Naive thymus-derived CD4-positive, alpha-beta T cell (primary cell): ENCODE measurements at regions of chr19 and their contacts with region 1.

Region 1: GRCh38 chr19:45643024-45643926 is 4.1 kb upstream of the EML2 start:
- DNase-seq: peak; percentile 78 to 97 (median 90)
- ATAC-seq: peak; percentile 44
- H3K4me3 ChIP-seq: no peak overlapping the region
- H3K4me3 Mint-ChIP-seq: peak overlapping the region; percentile 61 to 91 (median 80)
- H3K27ac ChIP-seq: peak overlapping the region; percentile 78
- H3K27ac Mint-ChIP-seq: peak overlapping the region; percentile 52 to 92 (median 85)
- H3K4me1 ChIP-seq: peaks cover 22 to 25% of the 10 kb centered on the region in 2 donors
- H3K4me1 Mint-ChIP-seq: peaks cover 31 to 54% (median 43%) of the 10 kb centered on the region in 7 donors
- H3K27me3 ChIP-seq: no peaks in the 10 kb centered on the region
- H3K27me3 Mint-ChIP-seq: peaks cover 0 to 6% (median 3%) of the 10 kb centered on the region in 5 donors

Region 2: DNA sequence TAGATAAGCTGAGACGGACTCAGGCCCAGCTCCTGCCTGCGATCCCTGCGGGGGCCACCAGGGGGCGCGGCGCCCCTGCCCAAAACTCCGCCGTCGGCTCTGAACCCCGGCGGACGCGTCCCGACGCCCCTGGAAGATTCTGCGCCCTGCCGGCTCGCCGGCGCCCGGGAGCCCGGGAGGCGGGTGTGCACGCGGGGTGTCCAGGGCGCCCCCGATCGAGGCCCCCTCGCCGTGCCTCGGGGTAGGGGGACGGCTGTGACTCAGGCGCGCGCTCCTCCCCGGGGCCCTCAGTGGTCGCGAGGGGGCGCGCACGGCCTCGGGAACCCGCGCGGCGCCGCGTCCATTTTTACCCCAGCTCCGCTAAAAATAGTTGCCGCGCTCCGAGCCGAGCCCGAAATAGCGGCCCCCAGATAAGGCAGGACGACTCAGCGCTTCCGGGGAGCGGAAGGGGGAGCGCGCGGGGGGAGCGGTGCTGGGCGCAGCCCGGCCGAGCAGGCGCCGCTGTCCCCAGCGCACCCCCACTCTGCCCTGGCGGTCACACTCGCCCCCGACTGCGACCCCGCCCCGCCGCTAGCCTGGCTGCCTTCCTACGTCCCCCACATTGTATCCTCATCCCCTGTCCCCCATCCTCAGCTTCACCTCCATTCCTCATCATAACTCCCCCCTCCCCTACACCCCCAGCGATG is 203.6 kb before region 1 on chr19:
- CTCF ChIA-PET with region 1: interaction called, 13 read pairs
- POLR2A ChIA-PET with region 1: interaction called, 3 read pairs
- intact Hi-C with region 1: loop called (anchors 1 kb)
- DNase-seq: peak; percentile 75 to 95 (median 86)
- ATAC-seq: peak; percentile 72
- H3K4me3 ChIP-seq: peak overlapping the region; percentile 57
- H3K4me3 Mint-ChIP-seq: peak overlapping the region; percentile 68 to 83 (median 77)
- H3K27ac ChIP-seq: peak overlapping the region; percentile 69
- H3K27ac Mint-ChIP-seq: peak overlapping the region in 4 of 9 donors; percentile 51 to 91 (median 74)
- H3K4me1 ChIP-seq: peaks cover 24% of the 10 kb centered on the region in 2 donors
- H3K4me1 Mint-ChIP-seq: peaks cover 26 to 35% (median 33%) of the 10 kb centered on the region in 7 donors
- H3K27me3 ChIP-seq: no peaks in the 10 kb centered on the region
- H3K27me3 Mint-ChIP-seq: peaks cover 0 to 5% (median 0%) of the 10 kb centered on the region in 5 donors

Region 3: GRCh38 chr19:45506246-45506990 is 136.9 kb before region 1 on chr19:
- CTCF ChIA-PET with region 1: interaction called, 15 read pairs
- POLR2A ChIA-PET with region 1: interaction called, 4 read pairs
- intact Hi-C with region 1: loop called (anchors 1 kb)
- DNase-seq: peak; percentile 95 to 99 (median 98)
- ATAC-seq: peak; percentile 88
- H3K4me3 ChIP-seq: peak overlapping the region; percentile 99
- H3K4me3 Mint-ChIP-seq: peak overlapping the region; percentile 91 to 96 (median 94)
- H3K27ac ChIP-seq: peak overlapping the region; percentile 87
- H3K27ac Mint-ChIP-seq: peak overlapping the region; percentile 91 to 98 (median 97)
- H3K4me1 ChIP-seq: peaks cover 14 to 20% of the 10 kb centered on the region in 2 donors
- H3K4me1 Mint-ChIP-seq: peaks cover 29 to 46% (median 34%) of the 10 kb centered on the region in 7 donors
- H3K27me3 ChIP-seq: no peaks in the 10 kb centered on the region
- H3K27me3 Mint-ChIP-seq: no peaks in the 10 kb centered on the region

Region 4: GRCh38 chr19:45584332-45585157 is 58.7 kb before region 1 on chr19 and contains the start of gene OPA3:
- CTCF ChIA-PET with region 1: interaction called, 3 read pairs
- POLR2A ChIA-PET with region 1: interaction called, 3 read pairs
- intact Hi-C with region 1: loop called (anchors 1 kb)
- DNase-seq: peak; percentile 88 to 100 (median 99)
- ATAC-seq: peak; percentile 92
- H3K4me3 ChIP-seq: peak within 1 kb of the TSS; percentile 85
- H3K4me3 Mint-ChIP-seq: peak within 1 kb of the TSS; percentile 90 to 99 (median 94)
- H3K27ac ChIP-seq: peak within 1 kb of the TSS; percentile 99
- H3K27ac Mint-ChIP-seq: peak within 1 kb of the TSS; percentile 97 to 100 (median 99)
- H3K4me1 ChIP-seq: peaks cover 6 to 10% of the 10 kb centered on the region in 2 donors
- H3K4me1 Mint-ChIP-seq: peaks cover 0 to 28% (median 20%) of the 10 kb centered on the region in 7 donors
- H3K27me3 ChIP-seq: no peaks in the 10 kb centered on the region
- H3K27me3 Mint-ChIP-seq: peaks cover 5 to 9% (median 7%) of the 10 kb centered on the region in 5 donors
- total RNA-seq, gene OPA3: 7.8 to 14.3 (median 9.0) TPM

Region 5: GRCh38 chr19:45615795-45616708 is 27.2 kb before region 1 on chr19:
- CTCF ChIA-PET with region 1: interaction called, 6 read pairs
- POLR2A ChIA-PET with region 1: interaction called, 6 read pairs
- intact Hi-C with region 1: loop called in 1 of 2 experiments (anchors 2 kb)
- DNase-seq: peak; percentile 37 to 81 (median 57)
- ATAC-seq: peak; percentile 95
- H3K4me3 ChIP-seq: no peak overlapping the region
- H3K4me3 Mint-ChIP-seq: no peak overlapping the region
- H3K27ac ChIP-seq: no peak overlapping the region
- H3K27ac Mint-ChIP-seq: peak overlapping the region in 4 of 9 donors; percentile 30 to 63 (median 42)
- H3K4me1 ChIP-seq: no peaks in the 10 kb centered on the region
- H3K4me1 Mint-ChIP-seq: peaks cover 0 to 19% (median 0%) of the 10 kb centered on the region in 7 donors
- H3K27me3 ChIP-seq: no peaks in the 10 kb centered on the region
- H3K27me3 Mint-ChIP-seq: no peaks in the 10 kb centered on the region

Region 6: DNA sequence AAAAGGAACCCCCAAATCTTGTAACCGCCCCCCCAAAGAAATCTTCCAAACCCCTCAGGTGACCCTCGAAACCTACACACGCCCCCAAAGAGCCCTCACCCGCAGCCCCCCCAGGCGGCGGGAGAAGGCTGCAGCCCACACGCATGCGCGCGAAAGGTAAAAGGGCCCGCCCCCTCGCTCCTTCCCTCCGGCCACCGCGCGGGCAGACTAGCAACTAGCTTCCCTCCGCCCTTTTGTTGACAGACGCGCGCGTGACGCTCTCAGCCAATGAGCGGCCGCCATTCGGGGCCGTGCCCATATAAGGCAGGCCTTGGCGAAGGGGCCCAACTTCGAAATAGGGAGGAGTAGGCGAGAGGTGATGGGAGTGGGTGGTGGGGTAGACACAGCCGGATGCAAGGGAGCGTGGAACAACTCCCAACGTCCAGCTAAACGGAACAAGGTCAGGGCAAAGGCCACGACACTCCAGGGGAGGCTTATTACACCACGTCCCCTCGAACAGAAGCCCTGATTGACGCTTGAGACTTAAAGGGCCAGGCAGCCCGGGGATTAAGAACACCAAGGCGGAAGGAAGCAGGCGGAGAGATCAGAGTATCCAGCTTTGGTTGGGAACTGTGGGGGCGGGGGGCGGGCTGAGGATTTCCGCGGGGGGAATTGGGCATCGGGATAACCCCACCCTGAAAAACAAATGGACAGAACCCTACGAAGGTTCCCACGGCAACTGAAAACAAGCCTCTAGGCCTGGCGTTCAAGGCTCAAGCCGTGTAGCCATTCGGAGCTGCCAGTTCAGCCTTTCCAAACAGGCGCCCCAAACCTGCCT is 74.1 kb after region 1 on chr19:
- CTCF ChIA-PET with region 1: interaction called, 4 read pairs
- POLR2A ChIA-PET with region 1: interaction called, 3 read pairs
- intact Hi-C with region 1: loop called in 1 of 2 experiments (anchors 2 kb)
- DNase-seq: peak; percentile 92 to 99 (median 98)
- ATAC-seq: peak; percentile 98
- H3K4me3 ChIP-seq: peak overlapping the region; percentile 80
- H3K4me3 Mint-ChIP-seq: peak overlapping the region; percentile 89 to 99 (median 95)
- H3K27ac ChIP-seq: peak overlapping the region; percentile 89
- H3K27ac Mint-ChIP-seq: peak overlapping the region; percentile 88 to 97 (median 96)
- H3K4me1 ChIP-seq: peaks cover 17 to 26% of the 10 kb centered on the region in 2 donors
- H3K4me1 Mint-ChIP-seq: peaks cover 26 to 55% (median 38%) of the 10 kb centered on the region in 7 donors
- H3K27me3 ChIP-seq: no peaks in the 10 kb centered on the region
- H3K27me3 Mint-ChIP-seq: no peaks in the 10 kb centered on the region